WTC11 (cell line): ENCODE measurements at regions of chr20 and their contacts with region 1.

Region 1: GRCh38 chr20:35092524-35093266 is at the start of gene TRPC4AP:
- DNase-seq: peak; percentile 88
- ATAC-seq: peak; percentile 90
- H3K4me3 Mint-ChIP-seq: peak within 1 kb of the TSS; percentile 89
- H3K27ac Mint-ChIP-seq: peak within 1 kb of the TSS; percentile 97
- H3K4me1 Mint-ChIP-seq: peaks cover 31% of the 10 kb centered on the region
- H3K27me3 Mint-ChIP-seq: peaks cover 8% of the 10 kb centered on the region; the same call in 1 of the 2 replicates
- CTCF ChIP-seq: peak; percentile 93
- total RNA-seq, gene TRPC4AP: 62.7 to 73.8 TPM (median 68.0 TPM) in 3 replicates

Region 2: DNA sequence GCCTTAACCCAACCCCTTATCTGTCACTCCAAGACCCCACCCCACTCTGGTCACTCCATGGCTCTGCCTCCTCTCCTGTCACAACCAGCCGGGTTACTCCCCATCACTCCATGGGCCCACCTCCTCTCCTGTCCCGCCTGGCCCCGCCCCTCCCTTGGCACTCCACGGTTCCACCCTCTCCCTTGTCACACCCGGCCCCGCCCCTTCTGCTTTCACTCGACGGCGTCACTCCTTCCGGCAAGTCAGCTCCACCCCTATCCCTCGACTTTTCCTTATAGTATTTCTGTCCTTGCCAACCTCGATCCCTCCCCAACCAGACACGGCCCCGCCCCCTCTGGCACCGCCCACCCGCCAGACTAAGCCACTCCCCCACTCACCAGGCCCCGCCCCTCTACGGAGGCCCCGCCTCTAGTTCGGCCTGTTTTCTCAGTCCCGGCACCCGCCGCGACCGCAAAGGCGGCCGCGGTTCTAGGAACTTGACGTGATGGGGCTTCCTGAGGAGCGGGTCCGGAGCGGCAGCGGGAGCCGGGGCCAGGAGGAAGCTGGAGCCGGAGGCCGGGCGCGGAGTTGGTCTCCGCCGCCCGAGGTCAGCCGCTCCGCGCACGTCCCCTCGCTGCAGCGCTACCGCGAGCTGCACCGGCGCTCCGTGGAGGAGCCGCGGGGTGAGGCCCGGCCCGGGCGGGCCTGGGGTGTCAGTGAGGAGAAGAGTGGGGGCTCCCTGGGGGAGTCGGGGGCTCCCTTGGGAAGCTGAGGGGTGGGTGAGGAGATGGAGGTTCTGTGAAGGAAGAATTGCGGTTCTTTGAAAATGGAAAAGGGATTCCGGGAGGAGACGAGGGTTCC is 216.3 kb before region 1 on chr20 and contains the start of gene ACSS2:
- CTCF ChIA-PET with region 1: interaction called, 14 read pairs
- POLR2A ChIA-PET with region 1: no interaction called
- DNase-seq: peak; percentile 100
- ATAC-seq: peak; percentile 90
- H3K4me3 Mint-ChIP-seq: peak within 1 kb of the TSS; percentile 98
- H3K27ac Mint-ChIP-seq: peak within 1 kb of the TSS; percentile 98
- H3K4me1 Mint-ChIP-seq: peaks cover 48% of the 10 kb centered on the region
- H3K27me3 Mint-ChIP-seq: peaks cover 34% of the 10 kb centered on the region
- CTCF ChIP-seq: no peak
- total RNA-seq, gene ACSS2: 28.9 to 35.9 TPM (median 29.0 TPM) in 3 replicates

Region 3: DNA sequence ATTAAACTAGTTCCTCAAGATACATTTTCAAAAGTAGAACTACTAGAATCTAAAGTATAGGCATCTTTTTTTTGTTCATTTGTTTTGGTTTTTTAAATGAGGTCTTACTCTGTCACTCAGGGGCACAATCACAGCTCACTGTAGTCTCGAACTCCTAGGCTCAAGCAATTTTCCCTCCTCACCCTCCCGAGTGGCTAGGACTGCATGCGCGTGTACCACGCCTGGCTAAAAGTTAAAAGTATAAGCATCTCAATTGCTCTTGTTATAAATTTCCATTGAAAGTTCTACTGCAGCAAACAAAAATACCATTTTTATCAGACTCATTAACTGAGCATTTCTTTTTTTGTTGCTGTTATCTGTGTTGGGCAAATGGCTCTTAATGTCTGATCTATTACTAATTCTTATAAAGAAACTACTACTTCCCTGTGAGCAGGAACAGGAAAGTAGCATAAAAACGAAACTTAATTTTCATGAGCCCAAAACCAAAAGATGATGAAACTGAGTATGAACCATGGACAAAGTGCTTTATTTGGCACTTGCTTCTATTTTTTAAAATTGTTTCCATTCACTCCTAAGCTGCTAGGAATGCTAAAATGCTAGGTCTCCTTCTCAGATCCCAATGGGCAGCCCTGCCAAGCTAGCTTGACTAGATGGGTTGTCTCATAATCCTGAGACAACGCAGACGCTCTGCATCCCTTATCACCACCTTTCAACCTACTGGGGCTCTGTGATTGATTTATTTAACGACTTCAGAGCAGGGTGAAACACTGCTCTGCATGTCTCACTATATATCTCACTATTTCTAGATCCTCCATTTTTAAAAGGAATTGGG is 37.0 kb before region 1 on chr20:
- CTCF ChIA-PET with region 1: interaction called, 5 read pairs
- POLR2A ChIA-PET with region 1: interaction called, 11 read pairs
- DNase-seq: no peak
- ATAC-seq: no peak
- H3K4me3 Mint-ChIP-seq: no peak overlapping the region
- H3K27ac Mint-ChIP-seq: peak overlapping the region; percentile 70
- H3K4me1 Mint-ChIP-seq: peaks cover 20% of the 10 kb centered on the region
- H3K27me3 Mint-ChIP-seq: no peaks in the 10 kb centered on the region
- CTCF ChIP-seq: no peak

Region 4: DNA sequence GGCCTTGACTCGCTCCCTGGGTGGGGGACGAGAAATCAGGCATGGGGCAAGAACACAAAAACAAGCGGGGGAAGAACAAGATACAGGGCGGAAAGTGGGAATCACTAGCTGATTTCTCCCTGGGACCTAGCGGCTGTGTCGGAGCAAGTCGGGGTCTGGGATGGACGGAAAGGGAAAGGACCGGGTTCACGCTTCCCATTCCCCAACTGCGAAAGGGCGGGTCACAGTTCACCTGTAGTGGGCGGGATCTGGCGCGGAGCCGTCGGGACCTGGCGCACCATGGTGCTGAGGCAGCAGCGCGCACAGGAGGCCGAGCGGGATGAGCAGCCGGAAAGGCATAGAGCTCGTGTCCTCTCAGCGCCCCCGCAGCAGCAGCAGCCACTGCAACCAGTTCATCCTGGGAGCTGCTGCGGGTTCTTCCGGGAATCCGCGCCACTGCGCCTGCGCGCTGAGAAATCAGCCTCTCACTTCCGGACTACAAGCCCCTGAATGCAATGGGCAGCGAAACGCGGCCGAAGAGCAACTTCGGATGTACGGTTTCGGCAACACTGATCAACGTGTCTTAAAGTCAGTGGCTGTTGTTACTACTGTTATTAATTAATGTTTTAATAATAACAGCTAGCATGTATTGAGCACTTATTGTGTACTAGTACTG is 54.4 kb after region 1 on chr20 and contains the start of gene EDEM2:
- CTCF ChIA-PET with region 1: interaction called, 30 read pairs
- POLR2A ChIA-PET with region 1: interaction called, 4 read pairs
- DNase-seq: peak; percentile 97
- ATAC-seq: peak; percentile 93
- H3K4me3 Mint-ChIP-seq: peak within 1 kb of the TSS; percentile 95
- H3K27ac Mint-ChIP-seq: peak within 1 kb of the TSS; percentile 98
- H3K4me1 Mint-ChIP-seq: peaks cover 18% of the 10 kb centered on the region
- H3K27me3 Mint-ChIP-seq: no peaks in the 10 kb centered on the region
- CTCF ChIP-seq: no peak
- total RNA-seq, gene EDEM2: 22.7 to 24.2 TPM (median 24.0 TPM) in 3 replicates

Region 5: DNA sequence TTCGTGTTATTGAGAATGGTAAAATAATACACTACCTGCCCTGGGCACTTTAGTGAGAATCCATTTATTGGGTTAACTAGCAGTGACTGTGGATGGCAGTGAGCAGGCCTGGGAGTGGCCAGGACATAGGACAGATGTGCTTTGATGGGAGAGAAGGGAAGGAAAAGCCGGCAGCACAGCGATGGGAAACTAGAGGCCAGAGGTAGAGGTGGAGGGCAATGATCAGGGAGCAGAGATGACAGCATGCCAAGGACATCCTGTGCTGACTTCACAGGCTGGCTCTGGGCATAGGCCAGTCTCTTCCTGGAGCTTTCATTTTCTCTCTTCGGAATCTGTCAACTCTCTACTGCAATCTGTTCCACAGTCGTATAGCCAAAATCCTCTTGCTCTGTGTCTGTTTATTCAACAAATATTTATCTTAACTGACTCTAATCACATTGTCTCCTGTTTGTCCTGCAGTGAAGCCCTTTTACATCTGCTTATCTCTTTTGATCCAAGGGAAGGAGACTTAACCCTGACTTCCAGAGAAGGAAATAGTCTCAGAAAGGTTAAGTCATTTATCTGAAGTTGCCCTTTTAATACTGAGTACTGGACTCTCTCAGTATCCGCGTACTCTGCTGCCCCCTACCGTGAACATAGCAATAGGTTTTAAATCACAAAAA is 115.4 kb after region 1 on chr20:
- CTCF ChIA-PET with region 1: interaction called, 19 read pairs
- POLR2A ChIA-PET with region 1: no interaction called
- DNase-seq: peak; percentile 79
- ATAC-seq: peak; percentile 96
- H3K4me3 Mint-ChIP-seq: no peak overlapping the region
- H3K27ac Mint-ChIP-seq: no peak overlapping the region
- H3K4me1 Mint-ChIP-seq: no peaks in the 10 kb centered on the region
- H3K27me3 Mint-ChIP-seq: no peaks in the 10 kb centered on the region
- CTCF ChIP-seq: peak; percentile 57

Region 6: DNA sequence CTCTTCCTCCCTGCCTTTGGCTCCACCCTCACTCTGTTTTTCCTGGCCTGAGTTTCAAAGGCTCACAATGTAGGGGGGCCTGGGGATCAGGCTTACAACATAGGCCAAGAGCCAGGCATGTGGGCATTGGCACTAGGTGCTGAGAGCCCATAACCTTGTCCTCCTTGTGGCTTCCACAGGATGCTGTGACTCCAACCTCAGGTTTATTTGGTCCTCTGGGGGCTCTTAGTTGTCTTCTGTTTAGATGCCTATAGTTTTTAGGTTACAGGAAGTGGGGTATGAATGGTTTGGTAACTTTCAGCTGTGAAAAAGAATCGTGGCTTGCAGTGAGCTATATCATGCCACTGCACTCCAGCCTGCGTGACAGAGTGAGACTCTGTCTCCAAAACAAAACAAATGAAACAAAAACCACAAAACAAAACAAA is 159.4 kb after region 1 on chr20:
- CTCF ChIA-PET with region 1: no interaction called
- POLR2A ChIA-PET with region 1: no interaction called
- DNase-seq: no peak
- ATAC-seq: no peak
- H3K4me3 Mint-ChIP-seq: no peak overlapping the region
- H3K27ac Mint-ChIP-seq: no peak overlapping the region
- H3K4me1 Mint-ChIP-seq: peaks cover 33% of the 10 kb centered on the region
- H3K27me3 Mint-ChIP-seq: no peaks in the 10 kb centered on the region
- CTCF ChIP-seq: no peak

Region 7: GRCh38 chr20:35269055-35269781 is 176.5 kb after region 1 on chr20:
- CTCF ChIA-PET with region 1: interaction called, 45 read pairs
- POLR2A ChIA-PET with region 1: interaction called, 4 read pairs
- DNase-seq: peak; percentile 91
- ATAC-seq: peak; percentile 84
- H3K4me3 Mint-ChIP-seq: no peak overlapping the region
- H3K27ac Mint-ChIP-seq: peak overlapping the region; percentile 86
- H3K4me1 Mint-ChIP-seq: peaks cover 37% of the 10 kb centered on the region
- H3K27me3 Mint-ChIP-seq: no peaks in the 10 kb centered on the region
- CTCF ChIP-seq: peak; percentile 78

Region 8: DNA sequence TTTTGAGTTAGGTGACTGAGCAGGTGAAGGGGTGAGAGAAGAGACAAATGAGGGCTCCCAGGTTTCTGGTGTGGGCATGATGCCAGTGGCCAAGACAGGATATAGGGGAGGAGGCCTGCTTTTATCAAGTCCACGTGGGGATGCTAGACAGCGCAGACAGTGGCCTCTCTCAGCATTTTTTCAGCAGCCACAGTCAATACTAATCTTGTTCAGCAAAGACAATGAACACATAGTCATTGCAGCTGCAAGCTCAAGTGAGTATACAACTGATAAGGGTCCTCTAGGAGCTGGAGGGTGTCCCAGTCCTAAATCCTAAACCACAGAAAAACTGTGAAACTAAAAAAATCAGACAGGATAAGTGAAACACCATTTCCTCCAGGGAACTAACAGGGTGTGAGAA is 270.5 kb after region 1 on chr20:
- CTCF ChIA-PET with region 1: no interaction called
- POLR2A ChIA-PET with region 1: no interaction called
- DNase-seq: no peak
- ATAC-seq: no peak
- H3K4me3 Mint-ChIP-seq: no peak overlapping the region
- H3K27ac Mint-ChIP-seq: no peak overlapping the region; the same call in 1 of the 2 replicates
- H3K4me1 Mint-ChIP-seq: no peaks in the 10 kb centered on the region
- H3K27me3 Mint-ChIP-seq: no peaks in the 10 kb centered on the region
- CTCF ChIP-seq: no peak